ENCODE measurements at regions of chr2 and their contacts with region 1.

Region 1: GRCh38 chr2:218186355-218186766 is 19.6 kb upstream of the CXCR1 start:
- DNase-seq: peak; percentile 29 to 79 (median 70)
- ATAC-seq: peak; percentile 97
- H3K4me3 ChIP-seq: no peak overlapping the region
- H3K4me3 Mint-ChIP-seq: no peak overlapping the region
- H3K27ac ChIP-seq: no peak overlapping the region
- H3K27ac Mint-ChIP-seq: peak overlapping the region in 1 of 9 donors; percentile 3
- H3K4me1 ChIP-seq: no peaks in the 10 kb centered on the region
- H3K4me1 Mint-ChIP-seq: peaks cover 0 to 14% (median 8%) of the 10 kb centered on the region in 7 donors
- H3K27me3 ChIP-seq: no peaks in the 10 kb centered on the region
- H3K27me3 Mint-ChIP-seq: peaks cover 0 to 24% (median 0%) of the 10 kb centered on the region in 5 donors

Region 2: GRCh38 chr2:217593732-217594131 is 592.6 kb before region 1 on chr2:
- CTCF ChIA-PET with region 1: no interaction called
- POLR2A ChIA-PET with region 1: no interaction called
- intact Hi-C with region 1: no loop called
- DNase-seq: no peak
- ATAC-seq: no peak
- H3K4me3 ChIP-seq: no peak overlapping the region
- H3K4me3 Mint-ChIP-seq: no peak overlapping the region
- H3K27ac ChIP-seq: no peak overlapping the region
- H3K27ac Mint-ChIP-seq: peak overlapping the region in 1 of 9 donors; percentile 11
- H3K4me1 ChIP-seq: peaks cover 0 to 4% of the 10 kb centered on the region in 2 donors
- H3K4me1 Mint-ChIP-seq: peaks cover 3 to 16% (median 12%) of the 10 kb centered on the region in 7 donors
- H3K27me3 ChIP-seq: no peaks in the 10 kb centered on the region
- H3K27me3 Mint-ChIP-seq: peaks cover 0 to 8% (median 0%) of the 10 kb centered on the region in 5 donors

Region 3: GRCh38 chr2:218229239-218229638 is 42.9 kb after region 1 on chr2:
- CTCF ChIA-PET with region 1: interaction called, 13 read pairs
- POLR2A ChIA-PET with region 1: no interaction called
- intact Hi-C with region 1: loop called (anchors 1 kb)
- DNase-seq: peak in 8 of 9 donors; percentile 34 to 58 (median 52)
- ATAC-seq: peak; percentile 88
- H3K4me3 ChIP-seq: no peak overlapping the region
- H3K4me3 Mint-ChIP-seq: peak overlapping the region; percentile 10 to 84 (median 76)
- H3K27ac ChIP-seq: peak overlapping the region; percentile 63
- H3K27ac Mint-ChIP-seq: peak overlapping the region; percentile 79 to 93 (median 87)
- H3K4me1 ChIP-seq: peaks cover 48 to 57% of the 10 kb centered on the region in 2 donors
- H3K4me1 Mint-ChIP-seq: peaks cover 64 to 87% (median 77%) of the 10 kb centered on the region in 7 donors
- H3K27me3 ChIP-seq: no peaks in the 10 kb centered on the region
- H3K27me3 Mint-ChIP-seq: no peaks in the 10 kb centered on the region

Region 4: DNA sequence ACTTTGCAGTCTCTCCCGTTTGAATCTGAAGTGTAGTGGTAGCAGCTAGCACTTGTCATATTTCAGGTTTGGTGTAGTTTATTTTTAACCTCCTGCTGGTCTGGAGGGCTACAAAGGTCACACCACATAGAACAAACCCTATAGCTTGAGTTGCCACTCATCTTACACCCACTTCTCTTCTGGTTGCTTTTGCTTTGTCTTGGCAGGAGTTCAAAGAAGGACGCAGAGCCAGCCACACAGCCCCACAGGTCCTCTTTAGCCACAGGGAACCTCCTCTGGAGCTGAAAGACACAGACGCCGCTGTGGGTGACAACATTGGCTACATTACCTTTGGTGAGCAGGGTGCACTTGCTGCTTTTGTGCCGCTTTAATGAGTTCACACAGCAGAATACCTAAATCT is 58.9 kb after region 1 on chr2:
- CTCF ChIA-PET with region 1: interaction called, 3 read pairs
- POLR2A ChIA-PET with region 1: no interaction called
- intact Hi-C with region 1: loop called in 1 of 2 experiments (anchors 1 kb)
- DNase-seq: no peak
- ATAC-seq: no peak
- H3K4me3 ChIP-seq: no peak overlapping the region
- H3K4me3 Mint-ChIP-seq: no peak overlapping the region
- H3K27ac ChIP-seq: peak overlapping the region; percentile 18
- H3K27ac Mint-ChIP-seq: peak overlapping the region in 8 of 9 donors; percentile 0 to 85 (median 53)
- H3K4me1 ChIP-seq: peaks cover 4 to 6% of the 10 kb centered on the region in 2 donors
- H3K4me1 Mint-ChIP-seq: peaks cover 0 to 28% (median 22%) of the 10 kb centered on the region in 7 donors
- H3K27me3 ChIP-seq: no peaks in the 10 kb centered on the region
- H3K27me3 Mint-ChIP-seq: no peaks in the 10 kb centered on the region

Region 5: DNA sequence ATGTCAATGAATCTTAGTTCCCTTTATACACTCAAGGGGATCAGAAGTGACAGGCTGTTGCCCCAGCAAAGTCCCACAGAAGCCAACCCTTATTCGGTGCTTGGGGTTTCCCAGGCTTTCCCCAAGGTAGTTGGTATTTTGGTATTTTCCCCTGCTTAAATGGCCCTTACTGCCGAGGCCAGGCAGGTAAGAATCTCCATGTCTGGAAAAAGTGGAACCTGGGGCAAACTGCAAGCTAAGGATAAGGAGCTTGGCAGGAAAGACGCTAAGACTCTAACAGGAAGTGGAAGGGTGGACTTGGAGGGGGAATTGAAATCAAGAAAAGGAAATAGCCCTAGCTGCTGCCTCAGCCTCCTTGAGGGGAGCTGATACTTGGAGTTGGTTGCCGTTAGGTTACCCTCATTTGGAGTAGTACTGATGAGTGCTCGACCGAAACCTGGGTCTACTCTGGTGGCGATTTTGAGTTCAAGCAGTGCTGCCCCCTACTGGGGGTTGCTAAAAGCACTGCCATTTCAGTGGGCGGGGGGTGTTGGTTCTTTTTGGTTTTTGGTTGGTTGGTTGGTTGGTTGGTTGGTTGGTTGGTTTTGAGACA is 71.1 kb after region 1 on chr2:
- CTCF ChIA-PET with region 1: interaction called, 8 read pairs
- POLR2A ChIA-PET with region 1: interaction called, 3 read pairs
- intact Hi-C with region 1: loop called (anchors 1 kb)
- DNase-seq: peak; percentile 39 to 67 (median 59)
- ATAC-seq: peak; percentile 85
- H3K4me3 ChIP-seq: no peak overlapping the region
- H3K4me3 Mint-ChIP-seq: peak overlapping the region; percentile 42 to 68 (median 52)
- H3K27ac ChIP-seq: peak overlapping the region; percentile 67
- H3K27ac Mint-ChIP-seq: peak overlapping the region; percentile 84 to 95 (median 92)
- H3K4me1 ChIP-seq: peaks cover 0 to 7% of the 10 kb centered on the region in 2 donors
- H3K4me1 Mint-ChIP-seq: peaks cover 7 to 23% (median 17%) of the 10 kb centered on the region in 7 donors
- H3K27me3 ChIP-seq: no peaks in the 10 kb centered on the region
- H3K27me3 Mint-ChIP-seq: no peaks in the 10 kb centered on the region

Region 6: GRCh38 chr2:218292048-218293014 is 106.0 kb after region 1 on chr2 and contains the start of gene TMBIM1:
- CTCF ChIA-PET with region 1: no interaction called
- POLR2A ChIA-PET with region 1: no interaction called
- intact Hi-C with region 1: loop called in 1 of 2 experiments (anchors 1 kb)
- DNase-seq: peak; percentile 72 to 90 (median 83)
- ATAC-seq: peak; percentile 96
- H3K4me3 ChIP-seq: peak within 1 kb of the TSS; percentile 53
- H3K4me3 Mint-ChIP-seq: peak within 1 kb of the TSS; percentile 82 to 96 (median 92)
- H3K27ac ChIP-seq: peak within 1 kb of the TSS; percentile 93
- H3K27ac Mint-ChIP-seq: peak within 1 kb of the TSS; percentile 88 to 99 (median 98)
- H3K4me1 ChIP-seq: peaks cover 42 to 47% of the 10 kb centered on the region in 2 donors
- H3K4me1 Mint-ChIP-seq: peaks cover 32 to 61% (median 53%) of the 10 kb centered on the region in 7 donors
- H3K27me3 ChIP-seq: no peaks in the 10 kb centered on the region
- H3K27me3 Mint-ChIP-seq: peaks cover 0 to 2% (median 0%) of the 10 kb centered on the region in 5 donors
- total RNA-seq, gene TMBIM1: 51.7 to 112 (median 83.8) TPM

Region 7: GRCh38 chr2:218466016-218466521 is 279.7 kb after region 1 on chr2:
- CTCF ChIA-PET with region 1: interaction called, 3 read pairs
- POLR2A ChIA-PET with region 1: no interaction called
- intact Hi-C with region 1: loop called in 1 of 2 experiments (anchors 1 kb)
- DNase-seq: peak in 3 of 9 donors; percentile 9 to 24 (median 23)
- ATAC-seq: peak; percentile 45
- H3K4me3 ChIP-seq: no peak overlapping the region
- H3K4me3 Mint-ChIP-seq: no peak overlapping the region
- H3K27ac ChIP-seq: no peak overlapping the region
- H3K27ac Mint-ChIP-seq: peak overlapping the region in 2 of 9 donors; percentile 3 to 62
- H3K4me1 ChIP-seq: peaks cover 0 to 4% of the 10 kb centered on the region in 2 donors
- H3K4me1 Mint-ChIP-seq: peaks cover 5 to 10% (median 9%) of the 10 kb centered on the region in 7 donors
- H3K27me3 ChIP-seq: no peaks in the 10 kb centered on the region
- H3K27me3 Mint-ChIP-seq: no peaks in the 10 kb centered on the region

Measured in naive thymus-derived CD4-positive, alpha-beta T cell (primary cell).